Gastrocnemius medialis (tissue), 4 donors: ENCODE measurements at regions of chr17 and their contacts with region 1.

Region 1: GRCh38 chr17:17919169-17920107 is 52.8 kb downstream of the TOM1L2 start:
- DNase-seq: peak; percentile 59 to 78
- ATAC-seq: peak; percentile 58
- H3K4me3 ChIP-seq: no peak overlapping the region
- H3K27ac ChIP-seq: peak overlapping the region in 1 of 4 donors; percentile 19
- H3K4me1 ChIP-seq: peaks cover 52 to 58% of the 10 kb centered on the region in 2 donors
- H3K27me3 ChIP-seq: no peaks in the 10 kb centered on the region
- CTCF ChIP-seq: peak; percentile 71 to 87 (median 81)
- POLR2A ChIP-seq: no peak

Region 2: DNA sequence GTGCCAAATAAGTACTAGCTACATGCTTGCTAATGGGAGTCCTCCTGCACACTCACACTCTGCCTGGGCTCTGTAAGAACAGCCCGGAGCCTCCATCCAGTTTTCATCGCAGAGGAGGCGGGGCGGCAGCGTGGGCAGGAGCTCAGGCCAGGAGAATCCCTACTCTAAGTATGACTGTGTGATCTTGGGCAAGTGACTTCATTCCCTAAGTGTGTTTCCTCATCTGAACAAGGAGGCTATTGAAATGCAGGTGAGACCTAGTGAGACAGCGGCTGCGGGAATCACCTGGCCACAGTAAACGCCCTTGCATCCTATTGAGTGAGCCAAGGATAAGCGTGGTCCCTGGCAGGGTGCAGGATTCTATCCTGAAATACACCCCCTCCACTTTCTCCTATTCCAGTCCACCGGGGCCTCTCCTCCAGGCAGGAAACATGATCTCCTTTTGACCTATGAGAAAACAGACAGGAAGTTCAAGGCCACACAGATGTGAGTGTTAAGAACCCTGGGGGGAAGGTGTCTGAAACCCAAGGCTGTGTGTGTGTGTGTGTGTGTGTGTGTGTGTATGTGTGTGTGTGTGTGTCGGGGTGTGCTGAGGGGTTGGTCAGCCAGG is 243.4 kb before region 1 on chr17:
- in situ Hi-C with region 1: loop called in 1 of 4 experiments (anchors 10 kb)
- intact Hi-C with region 1: loop called (anchors 2 kb)
- DNase-seq: no peak
- ATAC-seq: no peak
- H3K4me3 ChIP-seq: no peak overlapping the region
- H3K27ac ChIP-seq: no peak overlapping the region
- H3K4me1 ChIP-seq: peaks cover 3 to 7% of the 10 kb centered on the region in 2 donors
- H3K27me3 ChIP-seq: no peaks in the 10 kb centered on the region
- CTCF ChIP-seq: no peak
- POLR2A ChIP-seq: no peak

Region 3: GRCh38 chr17:17766077-17766743 is 153.2 kb before region 1 on chr17:
- in situ Hi-C with region 1: no loop called
- intact Hi-C with region 1: no loop called
- DNase-seq: no peak
- ATAC-seq: no peak
- H3K4me3 ChIP-seq: no peak overlapping the region
- H3K27ac ChIP-seq: no peak overlapping the region
- H3K4me1 ChIP-seq: peaks cover 42 to 49% of the 10 kb centered on the region in 2 donors
- H3K27me3 ChIP-seq: no peaks in the 10 kb centered on the region
- CTCF ChIP-seq: no peak
- POLR2A ChIP-seq: no peak

Region 4: DNA sequence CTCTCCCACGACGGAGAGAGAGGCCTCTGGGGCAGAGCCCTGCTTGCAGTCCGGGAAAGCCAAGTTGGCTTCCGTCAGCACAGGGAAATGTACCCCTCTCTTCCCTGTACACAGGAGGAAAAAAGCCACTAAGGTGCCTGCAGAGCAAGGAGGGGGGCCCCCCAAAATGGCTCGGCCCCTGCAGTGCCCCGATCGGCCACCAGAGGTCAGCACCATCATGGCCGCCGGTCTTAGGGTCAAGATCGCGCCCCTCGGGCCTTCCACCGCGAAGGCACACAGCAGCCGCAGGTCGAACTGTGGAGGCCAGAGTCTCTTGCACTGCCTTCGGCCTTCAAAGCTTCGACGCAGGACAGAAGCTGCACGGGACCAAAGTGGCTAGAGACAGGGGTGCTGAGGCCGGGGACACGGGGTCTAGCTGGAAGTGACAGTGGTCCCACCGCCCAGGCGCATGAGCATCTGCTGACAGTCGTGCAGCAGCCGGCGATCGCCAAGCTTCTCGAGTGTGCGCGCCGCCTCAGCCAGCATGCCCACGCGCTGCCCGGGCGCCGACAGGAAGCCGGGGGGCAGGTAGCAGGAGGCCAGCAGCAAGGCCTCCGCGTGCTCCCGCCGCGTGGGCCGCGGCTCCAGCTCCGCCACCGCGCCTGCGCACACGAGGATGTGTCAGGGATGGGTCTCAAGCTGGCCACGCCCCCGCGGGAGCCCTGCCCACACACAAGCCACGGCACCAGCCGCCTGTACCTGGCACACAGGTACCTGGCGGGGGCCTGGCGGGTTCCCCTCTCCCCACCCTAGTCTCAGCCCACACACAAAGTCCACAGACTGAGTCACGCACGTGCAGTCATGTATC is 107.0 kb before region 1 on chr17:
- in situ Hi-C with region 1: no loop called
- intact Hi-C with region 1: loop called (anchors 2 kb)
- DNase-seq: peak; percentile 49 to 70
- ATAC-seq: peak; percentile 50 to 61
- H3K4me3 ChIP-seq: no peak overlapping the region
- H3K27ac ChIP-seq: peak overlapping the region; percentile 2 to 88 (median 46)
- H3K4me1 ChIP-seq: peaks cover 32% of the 10 kb centered on the region in 2 donors
- H3K27me3 ChIP-seq: no peaks in the 10 kb centered on the region
- CTCF ChIP-seq: peak; percentile 98 to 100 (median 100)
- POLR2A ChIP-seq: no peak

Region 5: DNA sequence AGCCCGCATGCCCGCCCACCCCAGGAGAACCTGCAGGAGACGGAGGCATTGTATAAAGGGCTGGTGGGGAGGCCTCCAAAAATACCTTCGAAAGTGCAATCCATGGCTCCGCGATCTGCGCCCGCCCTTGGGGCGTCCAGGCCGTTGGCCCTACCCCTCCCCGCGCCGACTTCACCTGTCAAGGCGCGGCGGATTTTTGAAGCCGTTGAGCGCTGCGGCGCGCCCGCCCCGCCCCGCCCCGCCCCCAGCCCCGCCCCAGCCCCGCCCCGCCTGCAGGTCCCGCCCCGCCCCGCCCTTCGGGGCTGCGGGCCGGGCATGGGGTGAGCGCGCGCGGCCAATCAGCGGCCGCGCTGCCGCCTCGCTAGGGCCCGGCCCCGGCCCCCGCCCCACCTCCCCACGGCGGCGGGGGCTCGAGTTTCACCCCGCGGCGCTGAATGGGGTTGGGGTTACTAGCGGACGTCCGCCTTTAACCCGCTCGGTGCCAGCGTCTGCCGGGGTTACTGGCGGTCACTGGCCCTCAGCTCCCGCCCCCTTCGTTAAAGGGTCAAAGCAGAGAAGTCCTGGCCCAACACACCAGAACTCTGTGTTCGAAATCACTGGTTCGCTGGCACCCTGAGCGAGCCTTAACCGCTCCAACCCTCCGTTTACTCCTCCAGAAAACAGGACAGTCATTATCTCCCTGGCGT is 95.9 kb before region 1 on chr17:
- in situ Hi-C with region 1: no loop called
- intact Hi-C with region 1: no loop called
- DNase-seq: peak; percentile 79 to 93
- ATAC-seq: peak; percentile 68 to 73
- H3K4me3 ChIP-seq: peak overlapping the region; percentile 57 to 83 (median 64)
- H3K27ac ChIP-seq: peak overlapping the region; percentile 93 to 97 (median 96)
- H3K4me1 ChIP-seq: peaks cover 74 to 86% of the 10 kb centered on the region in 2 donors
- H3K27me3 ChIP-seq: no peaks in the 10 kb centered on the region
- CTCF ChIP-seq: no peak
- POLR2A ChIP-seq: peak; percentile 60 to 91

Region 6: GRCh38 chr17:17972126-17972951 is 52.9 kb after region 1 on chr17 and contains the starts of genes DRC3 and TOM1L2:
- in situ Hi-C with region 1: no loop called
- intact Hi-C with region 1: loop called (anchors 2 kb)
- DNase-seq: peak; percentile 100
- ATAC-seq: peak; percentile 98
- H3K4me3 ChIP-seq: peak within 1 kb of the TSS; percentile 76 to 95 (median 90)
- H3K27ac ChIP-seq: peak within 1 kb of the TSS; percentile 87 to 97 (median 97)
- H3K4me1 ChIP-seq: peaks cover 23 to 27% of the 10 kb centered on the region in 2 donors
- H3K27me3 ChIP-seq: no peaks in the 10 kb centered on the region
- CTCF ChIP-seq: peak; percentile 10 to 57 (median 25)
- POLR2A ChIP-seq: peak; percentile 96 to 98
- total RNA-seq, gene DRC3: 0.05 to 0.81 (median 0.28) TPM
- total RNA-seq, gene TOM1L2: 55.7 to 97.1 (median 73.3) TPM

Region 7: DNA sequence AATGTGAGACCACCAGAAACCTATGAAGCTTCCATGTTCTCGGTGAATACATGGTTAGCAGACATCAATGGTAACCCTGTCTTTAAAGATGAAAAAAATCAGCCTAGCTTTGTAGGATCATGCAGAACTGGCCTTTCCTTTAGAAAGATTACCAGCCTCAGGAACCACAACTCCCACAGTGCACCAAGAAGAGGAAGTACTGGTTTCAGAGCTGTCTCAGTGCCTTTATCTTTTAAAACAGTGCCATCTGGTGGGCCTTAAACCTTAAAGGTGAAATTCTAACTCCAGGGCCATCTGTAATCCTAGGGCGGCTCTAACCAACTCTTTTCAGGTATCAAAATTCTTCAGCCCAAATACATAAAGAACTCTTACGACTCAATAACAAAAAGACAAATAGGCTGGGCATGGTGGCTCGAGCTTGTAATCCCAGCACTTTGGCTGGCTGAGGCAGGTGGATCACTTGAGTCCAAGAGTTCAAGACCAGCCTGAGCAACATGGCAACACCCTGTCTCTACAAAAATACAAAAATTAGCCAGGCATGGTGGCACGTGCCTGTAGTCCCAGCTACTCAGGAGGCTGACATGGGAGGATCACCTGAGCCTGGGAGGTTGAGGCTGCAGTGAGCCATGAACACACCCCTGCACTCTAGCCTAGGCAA is 114.1 kb after region 1 on chr17:
- in situ Hi-C with region 1: no loop called
- intact Hi-C with region 1: loop called (anchors 2 kb)
- DNase-seq: peak; percentile 42 to 44
- ATAC-seq: peak; percentile 92 to 98
- H3K4me3 ChIP-seq: no peak overlapping the region
- H3K27ac ChIP-seq: peak overlapping the region; percentile 9 to 53 (median 45)
- H3K4me1 ChIP-seq: peaks cover 28 to 33% of the 10 kb centered on the region in 2 donors
- H3K27me3 ChIP-seq: no peaks in the 10 kb centered on the region
- CTCF ChIP-seq: peak; percentile 66 to 69 (median 67)
- POLR2A ChIP-seq: no peak

Region 8: DNA sequence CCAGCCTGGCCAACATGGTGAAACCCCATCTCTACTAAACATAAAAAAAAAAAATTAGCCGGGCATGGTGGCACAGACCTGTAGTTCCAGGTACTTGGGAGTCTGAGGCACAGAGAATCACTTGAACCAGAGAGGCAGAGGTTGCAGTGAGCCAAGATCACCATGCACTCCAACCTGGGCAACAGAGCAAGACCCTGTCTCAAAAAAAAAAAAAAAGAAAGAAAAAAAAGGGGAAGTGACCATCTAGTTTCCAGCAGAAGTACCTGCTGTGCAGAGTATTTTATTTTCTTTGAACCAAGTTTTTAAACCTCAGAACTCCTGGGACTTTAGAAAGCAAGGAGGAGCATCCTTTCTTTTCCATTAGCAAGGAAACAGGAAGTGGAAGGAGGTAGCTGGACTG is 126.3 kb after region 1 on chr17:
- in situ Hi-C with region 1: no loop called
- intact Hi-C with region 1: no loop called
- DNase-seq: no peak
- ATAC-seq: no peak
- H3K4me3 ChIP-seq: no peak overlapping the region
- H3K27ac ChIP-seq: no peak overlapping the region
- H3K4me1 ChIP-seq: peaks cover 21% of the 10 kb centered on the region in 2 donors
- H3K27me3 ChIP-seq: no peaks in the 10 kb centered on the region
- CTCF ChIP-seq: no peak
- POLR2A ChIP-seq: no peak